PC-9 (cell line): ENCODE measurements at regions of chr22 and their contacts with region 1.

Region 1: GRCh38 chr22:37330200-37331033 is 48.1 kb downstream of the CYTH4 start:
- DNase-seq: peak; percentile 82 to 94
- H3K4me3 ChIP-seq: peak overlapping the region; percentile 1; the same call in 1 of the 2 replicates
- H3K27ac ChIP-seq: peak overlapping the region; percentile 99
- H3K4me1 ChIP-seq: peaks cover 78% of the 10 kb centered on the region
- H3K27me3 ChIP-seq: no peaks in the 10 kb centered on the region
- CTCF ChIP-seq: peak; percentile 72

Region 2: GRCh38 chr22:35910003-35910769 is 1420.2 kb before region 1 on chr22:
- CTCF ChIA-PET with region 1: no interaction called
- POLR2A ChIA-PET with region 1: no interaction called
- intact Hi-C with region 1: no loop called
- DNase-seq: no peak
- H3K4me3 ChIP-seq: no peak overlapping the region
- H3K27ac ChIP-seq: peak overlapping the region; percentile 5
- H3K4me1 ChIP-seq: peaks cover 53% of the 10 kb centered on the region
- H3K27me3 ChIP-seq: no peaks in the 10 kb centered on the region
- CTCF ChIP-seq: no peak

Region 3: DNA sequence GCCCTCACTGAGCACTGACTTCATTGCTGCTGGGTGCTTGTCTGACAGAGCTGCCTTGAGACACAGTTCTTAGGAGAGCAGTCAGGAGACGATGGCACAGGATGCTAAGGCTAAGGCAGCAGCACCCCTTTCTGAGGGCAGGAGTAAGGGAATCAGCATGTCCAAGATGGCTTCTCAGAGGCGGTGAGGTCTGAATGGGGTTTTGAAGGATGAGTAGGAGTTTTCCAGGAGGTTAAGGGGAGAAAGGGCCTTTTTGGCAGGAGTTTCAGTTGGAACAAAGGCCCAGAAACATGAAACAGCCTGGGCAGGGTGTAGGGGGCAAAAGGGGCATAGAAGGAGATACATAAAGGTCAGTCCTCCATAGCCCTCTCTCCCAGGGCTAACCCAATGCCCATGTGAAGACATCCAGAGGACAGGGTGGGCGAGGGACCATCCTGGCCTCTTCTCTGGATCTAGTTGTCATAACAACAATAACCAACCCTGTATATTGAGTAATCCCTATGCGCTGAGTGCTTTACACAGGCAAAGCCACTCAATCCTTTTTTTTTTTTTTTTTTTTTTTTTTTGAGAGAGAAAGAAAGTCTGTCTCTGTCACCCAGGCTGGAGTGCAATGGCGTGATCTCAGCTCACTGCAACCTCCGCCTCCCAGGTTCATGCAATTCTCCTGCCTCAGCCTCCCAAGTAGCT is 29.1 kb before region 1 on chr22:
- CTCF ChIA-PET with region 1: no interaction called
- POLR2A ChIA-PET with region 1: interaction called, 31 read pairs
- intact Hi-C with region 1: no loop called
- DNase-seq: no peak
- H3K4me3 ChIP-seq: no peak overlapping the region
- H3K27ac ChIP-seq: no peak overlapping the region
- H3K4me1 ChIP-seq: peaks cover 27% of the 10 kb centered on the region
- H3K27me3 ChIP-seq: no peaks in the 10 kb centered on the region
- CTCF ChIP-seq: no peak

Region 4: DNA sequence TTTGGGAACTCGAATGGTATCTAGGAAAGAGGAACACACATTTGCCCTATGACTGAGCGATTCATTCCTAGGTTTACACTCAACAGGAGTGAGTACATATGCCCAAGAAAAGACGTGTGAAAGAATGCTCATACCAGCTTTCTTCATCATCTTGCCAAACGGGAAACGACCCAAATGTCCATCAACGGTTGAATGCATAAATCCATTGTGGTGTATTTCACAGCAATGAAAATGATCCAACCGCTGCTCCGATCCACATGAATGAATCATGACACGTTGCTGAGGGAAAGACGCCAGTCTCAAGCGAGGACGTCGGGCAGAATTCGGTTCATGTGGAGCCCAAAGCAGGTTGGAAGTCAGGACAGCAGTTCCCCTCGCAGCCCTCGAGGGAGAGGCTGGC is 23.4 kb after region 1 on chr22:
- CTCF ChIA-PET with region 1: interaction called, 12 read pairs
- POLR2A ChIA-PET with region 1: no interaction called
- intact Hi-C with region 1: loop called (anchors 2 kb)
- DNase-seq: peak; percentile 59 to 99
- H3K4me3 ChIP-seq: peak overlapping the region; percentile 1; the same call in 1 of the 2 replicates
- H3K27ac ChIP-seq: peak overlapping the region; percentile 90
- H3K4me1 ChIP-seq: peaks cover 57% of the 10 kb centered on the region
- H3K27me3 ChIP-seq: no peaks in the 10 kb centered on the region
- CTCF ChIP-seq: no peak

Region 5: GRCh38 chr22:37428649-37429586 is 98.5 kb after region 1 on chr22:
- CTCF ChIA-PET with region 1: no interaction called
- POLR2A ChIA-PET with region 1: no interaction called
- intact Hi-C with region 1: loop called (anchors 1 kb)
- DNase-seq: no peak
- H3K4me3 ChIP-seq: no peak overlapping the region
- H3K27ac ChIP-seq: no peak overlapping the region
- H3K4me1 ChIP-seq: peaks cover 50% of the 10 kb centered on the region
- H3K27me3 ChIP-seq: no peaks in the 10 kb centered on the region
- CTCF ChIP-seq: peak; percentile 82